ENCODE measurements at regions of chr5 and their contacts with region 1.

Region 1: DNA sequence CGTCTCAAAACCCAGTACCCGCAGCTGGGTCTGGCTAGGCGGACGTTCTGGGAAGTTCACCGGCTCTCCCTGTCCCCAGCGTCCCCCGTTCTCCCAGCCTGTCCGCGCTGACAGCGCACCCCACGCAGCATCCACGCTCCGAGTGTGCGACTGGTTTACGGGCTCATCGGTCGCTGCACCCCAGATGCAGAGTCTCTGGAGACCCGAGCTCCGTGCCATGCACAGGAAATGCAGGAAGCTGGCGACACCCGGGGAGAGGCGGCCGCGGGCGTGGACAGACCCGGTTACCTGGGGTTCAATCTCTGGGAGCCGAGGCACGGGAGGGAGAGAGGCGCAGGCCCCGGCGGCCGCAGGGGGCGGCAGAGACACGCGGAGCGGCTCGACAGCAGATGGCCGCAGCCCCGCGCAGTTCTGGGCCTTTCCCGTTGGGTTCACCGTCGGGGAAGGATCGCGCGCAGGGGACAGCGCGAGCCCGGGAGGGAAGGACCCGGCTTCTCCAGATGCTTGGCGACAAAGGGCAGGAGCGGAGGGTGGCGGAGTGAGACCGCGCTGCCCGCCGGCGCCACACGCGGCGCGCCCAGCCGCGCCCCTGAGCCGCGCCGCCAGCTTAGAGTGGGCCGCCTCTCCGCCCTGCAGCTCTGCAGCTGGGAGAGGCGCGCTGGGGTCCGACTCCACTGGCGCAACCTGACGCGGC is 558 bp downstream of the SHROOM1 start:
- DNase-seq: peak; percentile 66
- H3K4me3 Mint-ChIP-seq: peak overlapping the region; percentile 85
- H3K27ac Mint-ChIP-seq: peak overlapping the region; percentile 79
- H3K4me1 Mint-ChIP-seq: peaks cover 31% of the 10 kb centered on the region
- H3K27me3 Mint-ChIP-seq: peaks cover 56% of the 10 kb centered on the region

Region 2: GRCh38 chr5:132612846-132613245 is 217.0 kb before region 1 on chr5:
- intact Hi-C with region 1: no loop called
- DNase-seq: no peak
- H3K4me3 Mint-ChIP-seq: no peak overlapping the region
- H3K27ac Mint-ChIP-seq: no peak overlapping the region
- H3K4me1 Mint-ChIP-seq: peaks cover 10% of the 10 kb centered on the region
- H3K27me3 Mint-ChIP-seq: no peaks in the 10 kb centered on the region

Region 3: DNA sequence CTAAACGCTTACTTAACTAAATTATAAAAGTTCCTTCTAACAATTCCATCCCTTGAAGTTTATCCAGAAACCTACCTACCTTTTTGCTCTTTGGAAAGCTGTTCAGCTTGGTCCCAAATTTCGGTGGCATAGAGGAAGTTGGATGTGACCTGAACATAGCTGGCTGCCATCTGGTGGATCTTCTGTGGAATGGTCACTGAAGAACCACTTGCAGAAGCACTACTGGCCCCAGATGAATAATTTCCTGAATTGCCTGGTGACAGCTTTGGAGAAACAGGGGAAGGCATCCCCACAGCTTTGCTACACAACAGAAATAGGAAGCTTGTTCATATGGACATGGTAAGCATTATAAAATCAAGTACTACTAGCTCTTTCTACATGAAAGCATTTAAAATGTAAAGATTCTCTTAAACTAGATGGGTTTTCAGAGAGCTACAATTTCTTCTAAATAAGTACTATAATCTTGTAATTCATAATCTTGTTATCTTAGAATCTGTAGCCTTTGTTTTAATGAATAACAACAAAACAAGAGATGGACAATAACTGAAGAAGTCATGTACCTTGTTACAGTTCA is 53.5 kb after region 1 on chr5:
- intact Hi-C with region 1: loop called (anchors 1 kb)
- DNase-seq: no peak
- H3K4me3 Mint-ChIP-seq: no peak overlapping the region
- H3K27ac Mint-ChIP-seq: peak overlapping the region; percentile 22
- H3K4me1 Mint-ChIP-seq: peaks cover 24% of the 10 kb centered on the region
- H3K27me3 Mint-ChIP-seq: no peaks in the 10 kb centered on the region

Measured in activated T-helper 1 cell treated with anti-CD3 and anti-CD28 coated beads, Interleukin-12 subunit alpha, Interleukin-12 subunit beta, Interleukin-2, Interleukin-4 antibody, amounts not matched to agents 30 ng/mL and 10 ng/mL and 1 ng/mL, durations not matched to agents 14 hours and 24 hours and 36 hours (primary cell).